Posterior vena cava (tissue), 2 donors: ENCODE measurements at regions of chr1 and their contacts with region 1.

Region 1: GRCh38 chr1:225280563-225280962 is 147.3 kb downstream of the LBR start:
- DNase-seq: no peak

Region 2: DNA sequence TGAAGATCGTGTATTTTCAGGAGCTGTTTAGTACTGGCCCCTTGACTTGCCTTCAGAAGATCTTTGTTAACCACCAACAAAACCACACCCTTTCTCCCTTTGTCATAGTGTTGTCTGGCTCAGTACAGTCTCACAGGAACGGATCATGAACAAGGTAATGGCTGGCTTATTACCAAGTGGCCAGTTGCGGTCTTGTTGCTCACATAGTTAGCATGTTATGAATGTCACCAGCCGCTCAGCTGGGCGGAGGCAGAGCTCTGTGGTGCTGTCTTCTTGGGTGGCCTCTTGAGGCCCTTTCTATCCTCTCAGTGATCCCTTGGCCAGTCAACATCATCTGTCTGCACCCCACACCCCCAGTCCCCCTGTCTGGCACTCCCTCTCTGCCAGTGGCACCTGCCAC is 643.0 kb before region 1 on chr1:
- intact Hi-C with region 1: loop called in 1 of 2 experiments (anchors 5 kb)
- DNase-seq: no peak

Region 3: DNA sequence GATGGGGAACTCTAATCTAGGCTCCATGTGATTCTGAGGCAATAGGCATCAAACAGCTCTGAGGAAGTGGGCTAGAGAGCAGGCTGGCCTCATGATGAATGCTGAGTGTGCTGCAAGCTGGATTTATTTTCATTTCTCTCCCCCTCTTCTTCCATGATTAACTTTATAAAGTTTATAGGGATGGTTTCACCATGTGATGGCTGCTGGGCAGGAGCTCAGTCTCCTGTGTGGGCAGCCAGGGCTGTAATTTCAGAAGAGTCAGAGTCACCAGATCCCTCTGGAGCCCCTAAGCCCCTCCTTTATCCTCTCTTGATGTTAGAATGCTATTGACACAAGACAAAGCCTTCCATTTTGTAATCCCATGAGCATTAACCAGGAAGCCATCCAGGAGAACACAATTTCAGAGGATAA is 520.9 kb before region 1 on chr1:
- intact Hi-C with region 1: no loop called
- DNase-seq: no peak

Region 4: GRCh38 chr1:225209153-225209552 is 71.4 kb before region 1 on chr1:
- intact Hi-C with region 1: no loop called
- DNase-seq: no peak